Aorta (tissue), 5 donors: ENCODE measurements at regions of chr2 and their contacts with region 1.

Region 1: GRCh38 chr2:677056-677965 is at the start of gene TMEM18:
- DNase-seq: peak; percentile 95 to 96
- ATAC-seq: peak; percentile 96
- H3K4me3 ChIP-seq: peak within 1 kb of the TSS; percentile 24 to 50
- H3K27ac ChIP-seq: peak within 1 kb of the TSS; percentile 46 to 89
- H3K4me1 ChIP-seq: no peaks in the 10 kb centered on the region
- H3K27me3 ChIP-seq: no peaks in the 10 kb centered on the region
- total RNA-seq, gene TMEM18: 21.5 to 22.4 TPM

Region 2: DNA sequence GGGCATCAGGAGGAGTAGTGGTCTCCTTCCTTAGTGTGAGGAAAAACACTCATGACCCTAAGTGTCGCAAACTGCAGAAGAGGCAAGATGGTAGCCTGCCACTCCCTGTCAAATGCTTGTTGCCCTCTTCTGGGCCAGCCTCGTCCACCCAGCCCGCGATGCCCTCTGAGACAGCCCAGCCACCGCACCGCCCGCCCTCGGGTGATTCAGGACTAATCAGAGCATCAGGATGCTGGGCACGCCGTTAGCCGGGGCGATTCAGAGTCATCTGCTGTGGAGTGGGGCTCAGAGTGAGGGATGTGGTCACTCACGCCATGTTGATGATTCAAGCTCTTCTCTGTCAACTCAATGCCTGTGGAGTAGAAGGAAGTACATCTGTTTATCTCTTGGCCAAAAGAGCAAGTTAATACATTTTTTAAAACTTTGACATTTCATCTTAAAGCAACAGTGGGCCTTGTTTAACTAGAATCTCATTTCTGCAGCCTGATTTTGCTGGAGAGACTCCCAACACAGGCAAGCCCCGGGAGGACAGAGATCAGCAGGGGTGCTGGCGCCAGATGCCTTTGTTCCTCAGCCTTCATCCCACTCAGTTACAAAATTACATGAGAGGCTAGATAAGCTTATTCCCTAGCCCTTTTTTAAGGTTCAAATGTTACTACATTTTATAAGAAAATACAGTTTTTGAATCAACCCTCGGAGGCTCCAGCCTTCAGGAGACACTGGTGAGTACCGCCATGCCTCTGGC is 79.1 kb before region 1 on chr2:
- intact Hi-C with region 1: no loop called
- DNase-seq: peak in 1 of 2 donors; percentile 71
- ATAC-seq: no peak
- H3K4me3 ChIP-seq: no peak overlapping the region
- H3K27ac ChIP-seq: no peak overlapping the region
- H3K4me1 ChIP-seq: no peaks in the 10 kb centered on the region
- H3K27me3 ChIP-seq: no peaks in the 10 kb centered on the region

Region 3: GRCh38 chr2:735670-736582 is 58.6 kb after region 1 on chr2:
- intact Hi-C with region 1: loop called in 1 of 2 experiments (anchors 5 kb)
- DNase-seq: no peak
- ATAC-seq: no peak
- H3K4me3 ChIP-seq: no peak overlapping the region
- H3K27ac ChIP-seq: no peak overlapping the region
- H3K4me1 ChIP-seq: no peaks in the 10 kb centered on the region
- H3K27me3 ChIP-seq: no peaks in the 10 kb centered on the region

Region 4: GRCh38 chr2:1004398-1004797 is 327.1 kb after region 1 on chr2:
- intact Hi-C with region 1: no loop called
- DNase-seq: no peak
- ATAC-seq: no peak
- H3K4me3 ChIP-seq: no peak overlapping the region
- H3K27ac ChIP-seq: no peak overlapping the region
- H3K4me1 ChIP-seq: no peaks in the 10 kb centered on the region
- H3K27me3 ChIP-seq: peaks cover 0 to 2% of the 10 kb centered on the region in 2 donors

Region 5: DNA sequence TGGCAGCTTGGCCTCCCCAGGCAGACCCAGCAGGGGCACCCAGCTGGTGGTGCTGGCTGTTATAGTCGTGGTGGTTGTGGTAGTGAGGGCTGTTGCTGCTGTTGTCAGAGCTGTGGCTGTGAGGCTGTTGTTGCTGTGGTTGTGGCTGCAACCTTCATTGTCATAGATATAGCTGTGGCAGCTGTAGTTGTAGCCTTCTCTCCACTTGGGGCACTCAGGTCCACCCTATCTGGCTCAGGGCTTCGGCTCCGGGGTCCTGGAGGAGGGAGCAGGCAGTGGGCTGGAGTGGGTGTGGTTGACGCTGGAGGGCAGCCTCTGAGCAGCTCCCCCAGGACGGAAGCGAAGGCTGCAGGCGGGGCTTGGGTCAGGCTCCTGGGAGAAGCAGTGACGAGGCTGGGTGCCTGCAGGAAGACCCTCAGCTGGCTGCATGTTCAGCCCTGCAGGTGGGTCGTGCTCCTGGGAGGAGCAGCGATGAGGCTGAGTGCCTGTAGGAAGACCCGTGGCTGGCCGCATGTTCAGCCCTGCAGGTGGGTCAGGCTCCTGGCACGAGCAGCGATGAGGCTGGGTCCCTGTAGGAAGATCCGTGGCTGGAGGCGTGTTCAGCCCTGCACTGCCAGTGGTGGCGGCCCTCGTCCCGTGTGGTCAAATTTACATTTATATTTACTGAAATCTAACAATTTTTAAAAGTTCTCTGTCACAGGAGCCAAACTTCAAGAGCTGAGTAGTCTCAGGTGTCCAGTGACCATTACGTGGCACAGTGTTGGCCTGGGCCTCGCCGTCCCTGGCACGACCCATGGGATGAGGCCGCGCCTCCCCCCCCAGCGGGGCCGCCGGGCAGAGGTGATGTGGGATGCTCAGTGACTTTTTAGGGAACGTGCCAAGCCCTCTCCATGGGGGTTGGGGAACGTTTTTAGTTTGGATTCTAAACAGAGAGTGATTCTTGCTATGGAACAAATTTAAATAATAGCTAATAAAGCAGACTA is 1146.2 kb after region 1 on chr2:
- intact Hi-C with region 1: loop called in 1 of 2 experiments (anchors 5 kb)
- DNase-seq: peak in 1 of 2 donors; percentile 82
- ATAC-seq: peak; percentile 24
- H3K4me3 ChIP-seq: peak overlapping the region in 1 of 2 donors; percentile 3
- H3K27ac ChIP-seq: peak overlapping the region; percentile 91 to 93
- H3K4me1 ChIP-seq: no peaks in the 10 kb centered on the region
- H3K27me3 ChIP-seq: no peaks in the 10 kb centered on the region